Activated CD8-positive, alpha-beta memory T cell treated with anti-CD3 and anti-CD28 coated beads, Interleukin-2, amount 10 ng/mL, durations not matched to agents 7 days and 5 days (primary cell): ENCODE measurements at regions of chr14 and their contacts with region 1.

Region 1: GRCh38 chr14:54566410-54567223 is at the start of gene SAMD4A:
- DNase-seq: peak; percentile 67
- ATAC-seq: peak; percentile 38
- H3K4me3 Mint-ChIP-seq: peak within 1 kb of the TSS; percentile 79
- H3K27ac Mint-ChIP-seq: peak within 1 kb of the TSS; percentile 32
- H3K4me1 Mint-ChIP-seq: peaks cover 19% of the 10 kb centered on the region
- H3K27me3 Mint-ChIP-seq: peaks cover 46% of the 10 kb centered on the region
- total RNA-seq, gene SAMD4A: 1.6 to 1.7 TPM

Region 2: DNA sequence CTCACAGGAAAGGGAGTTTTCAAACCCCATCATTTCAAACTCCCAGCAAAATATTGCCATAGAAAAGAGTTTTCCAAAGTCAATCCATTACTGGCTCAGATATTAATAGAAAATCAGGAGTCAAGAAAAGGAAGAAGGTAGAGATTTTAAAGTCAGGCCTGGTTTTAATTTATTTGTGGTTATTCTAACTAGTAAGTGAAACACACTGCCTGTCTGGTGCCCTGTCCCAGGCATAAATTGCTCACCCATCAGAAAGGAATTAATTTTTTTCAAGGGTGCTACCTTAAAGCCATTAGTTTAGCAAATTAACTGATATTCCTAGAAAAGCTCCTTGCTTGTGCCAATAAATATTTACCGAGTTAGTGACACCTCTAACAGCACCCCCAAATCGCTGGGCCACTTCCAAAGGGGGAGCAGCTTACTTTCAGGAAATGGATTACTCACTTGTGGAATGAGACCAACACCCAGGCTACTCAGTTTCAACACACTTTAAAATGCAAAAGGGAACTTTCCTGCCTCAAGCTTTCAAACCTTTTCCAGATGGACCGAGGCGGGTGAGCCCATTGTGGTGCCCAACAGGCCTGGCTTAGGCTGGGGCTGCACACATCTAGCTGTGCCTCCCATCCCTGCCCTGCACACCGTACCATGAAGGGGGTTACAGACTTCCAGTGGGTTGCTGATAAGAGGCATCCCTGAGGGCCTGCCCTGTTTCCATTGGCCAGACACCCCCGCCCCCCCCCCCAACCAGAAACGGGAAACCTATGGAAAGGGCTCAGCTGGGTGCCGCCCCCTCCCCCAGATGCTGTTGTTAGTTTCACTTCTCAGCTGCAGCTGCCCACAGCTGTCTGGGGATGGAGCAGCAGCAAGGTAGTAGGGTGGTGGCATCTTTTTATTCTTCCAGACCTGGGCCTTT is 117.5 kb after region 1 on chr14:
- CTCF ChIA-PET with region 1: interaction called, 50 read pairs
- DNase-seq: no peak
- ATAC-seq: no peak
- H3K4me3 Mint-ChIP-seq: no peak overlapping the region
- H3K27ac Mint-ChIP-seq: no peak overlapping the region
- H3K4me1 Mint-ChIP-seq: peaks cover 22% of the 10 kb centered on the region
- H3K27me3 Mint-ChIP-seq: peaks cover 72% of the 10 kb centered on the region

Region 3: GRCh38 chr14:54691525-54692283 is 125.1 kb after region 1 on chr14:
- CTCF ChIA-PET with region 1: interaction called, 50 read pairs
- DNase-seq: peak; percentile 72
- ATAC-seq: peak; percentile 75
- H3K4me3 Mint-ChIP-seq: no peak overlapping the region
- H3K27ac Mint-ChIP-seq: no peak overlapping the region
- H3K4me1 Mint-ChIP-seq: peaks cover 13% of the 10 kb centered on the region
- H3K27me3 Mint-ChIP-seq: peaks cover 78% of the 10 kb centered on the region

Region 4: DNA sequence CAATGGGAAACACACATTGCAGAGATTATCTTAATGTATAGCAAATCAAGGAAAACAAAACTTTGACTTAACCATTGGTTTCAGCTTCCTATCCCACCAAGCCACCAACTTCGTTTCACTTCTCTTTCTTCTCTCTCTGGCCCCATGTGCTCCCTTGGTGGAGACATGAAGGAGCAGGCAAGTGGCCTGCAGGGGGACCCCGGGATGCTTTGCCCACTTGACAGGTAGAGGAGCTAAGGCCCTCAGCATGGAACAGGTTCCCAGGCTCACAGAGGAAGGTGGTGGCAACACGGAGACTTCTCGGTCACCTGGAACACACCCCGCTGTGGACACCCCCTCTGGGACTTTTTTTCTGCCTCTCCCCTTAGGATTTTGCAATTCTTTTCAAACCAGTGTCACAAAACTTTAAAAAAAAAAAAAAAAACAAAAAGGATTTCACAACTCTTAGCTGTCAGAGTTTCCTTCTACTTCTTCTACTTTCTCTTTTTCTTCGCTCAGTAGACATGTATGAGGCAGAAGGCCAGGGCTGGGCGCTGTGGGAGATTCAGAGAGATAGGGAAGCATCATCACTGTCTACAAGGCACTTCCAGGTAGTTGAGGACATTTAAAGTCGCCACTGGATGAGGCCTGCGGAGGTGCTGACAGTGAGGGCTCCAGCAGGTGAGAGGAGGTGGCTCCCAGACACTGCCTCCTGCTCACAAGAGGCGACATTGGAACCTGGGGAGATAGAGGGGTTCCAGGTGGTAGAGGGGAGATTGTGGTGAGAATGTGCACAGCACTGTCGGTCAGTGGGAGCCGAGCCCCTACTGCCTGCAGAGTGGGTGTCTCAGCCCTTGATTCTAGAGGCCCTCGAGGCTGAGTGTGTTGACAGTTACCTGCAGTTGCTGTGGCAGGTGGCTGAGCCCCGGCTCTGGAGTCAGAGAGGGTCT is 216.4 kb after region 1 on chr14:
- CTCF ChIA-PET with region 1: interaction called, 246 read pairs
- DNase-seq: no peak
- ATAC-seq: no peak
- H3K4me3 Mint-ChIP-seq: no peak overlapping the region
- H3K27ac Mint-ChIP-seq: no peak overlapping the region
- H3K4me1 Mint-ChIP-seq: peaks cover 14% of the 10 kb centered on the region
- H3K27me3 Mint-ChIP-seq: peaks cover 36% of the 10 kb centered on the region